ENCODE measurements at regions of chr6 and their contacts with region 1.

Region 1: DNA sequence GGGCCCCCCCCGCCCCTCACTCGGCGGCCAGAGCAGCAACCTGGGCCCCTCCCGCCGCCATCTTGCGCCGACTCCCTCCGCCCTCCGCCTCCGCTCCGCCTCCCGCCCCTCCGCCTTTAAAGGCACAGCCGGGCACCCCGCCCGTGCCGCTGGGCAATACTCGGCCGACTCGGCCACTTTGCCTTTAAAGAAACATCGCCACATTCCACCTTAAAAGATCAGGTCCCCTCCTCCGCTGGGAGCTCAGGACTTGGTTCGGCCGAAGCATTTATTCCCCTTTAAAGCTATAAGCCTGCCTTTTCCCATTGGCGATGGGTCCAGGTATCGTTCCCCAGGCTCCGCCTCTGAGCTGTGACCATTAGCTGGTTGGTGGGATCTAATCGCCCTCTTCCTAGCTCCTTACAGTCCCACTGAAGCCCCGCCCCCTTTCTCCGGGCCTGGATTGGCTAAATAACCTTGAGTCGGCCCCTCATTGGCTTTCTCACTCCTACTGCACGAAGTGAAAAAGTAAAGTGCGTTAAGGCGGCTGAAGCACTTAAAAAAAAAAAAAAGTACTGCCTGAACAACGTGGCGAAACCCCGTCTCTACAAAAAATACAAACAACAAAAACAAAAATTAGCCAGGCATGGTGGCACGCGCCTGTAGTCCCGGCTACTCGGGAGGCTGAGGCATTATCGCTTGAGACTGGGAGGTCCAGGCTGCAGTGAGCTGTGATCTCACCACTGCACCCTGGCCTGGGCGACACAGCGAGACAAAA is at the start of gene ZBTB22:
- DNase-seq: peak; percentile 87 to 97 (median 96)
- ATAC-seq: peak; percentile 73
- H3K4me3 ChIP-seq: peak within 1 kb of the TSS; percentile 97
- H3K4me3 Mint-ChIP-seq: peak within 1 kb of the TSS; percentile 81 to 100 (median 100)
- H3K27ac ChIP-seq: peak within 1 kb of the TSS; percentile 99
- H3K27ac Mint-ChIP-seq: peak within 1 kb of the TSS; percentile 97 to 99 (median 98)
- H3K4me1 ChIP-seq: peaks cover 59 to 62% of the 10 kb centered on the region in 2 donors
- H3K4me1 Mint-ChIP-seq: peaks cover 53 to 85% (median 75%) of the 10 kb centered on the region in 7 donors
- H3K27me3 ChIP-seq: no peaks in the 10 kb centered on the region
- H3K27me3 Mint-ChIP-seq: peaks cover 0 to 2% (median 0%) of the 10 kb centered on the region in 5 donors
- total RNA-seq, gene ZBTB22: 15.5 to 30.1 (median 20.5) TPM

Region 2: DNA sequence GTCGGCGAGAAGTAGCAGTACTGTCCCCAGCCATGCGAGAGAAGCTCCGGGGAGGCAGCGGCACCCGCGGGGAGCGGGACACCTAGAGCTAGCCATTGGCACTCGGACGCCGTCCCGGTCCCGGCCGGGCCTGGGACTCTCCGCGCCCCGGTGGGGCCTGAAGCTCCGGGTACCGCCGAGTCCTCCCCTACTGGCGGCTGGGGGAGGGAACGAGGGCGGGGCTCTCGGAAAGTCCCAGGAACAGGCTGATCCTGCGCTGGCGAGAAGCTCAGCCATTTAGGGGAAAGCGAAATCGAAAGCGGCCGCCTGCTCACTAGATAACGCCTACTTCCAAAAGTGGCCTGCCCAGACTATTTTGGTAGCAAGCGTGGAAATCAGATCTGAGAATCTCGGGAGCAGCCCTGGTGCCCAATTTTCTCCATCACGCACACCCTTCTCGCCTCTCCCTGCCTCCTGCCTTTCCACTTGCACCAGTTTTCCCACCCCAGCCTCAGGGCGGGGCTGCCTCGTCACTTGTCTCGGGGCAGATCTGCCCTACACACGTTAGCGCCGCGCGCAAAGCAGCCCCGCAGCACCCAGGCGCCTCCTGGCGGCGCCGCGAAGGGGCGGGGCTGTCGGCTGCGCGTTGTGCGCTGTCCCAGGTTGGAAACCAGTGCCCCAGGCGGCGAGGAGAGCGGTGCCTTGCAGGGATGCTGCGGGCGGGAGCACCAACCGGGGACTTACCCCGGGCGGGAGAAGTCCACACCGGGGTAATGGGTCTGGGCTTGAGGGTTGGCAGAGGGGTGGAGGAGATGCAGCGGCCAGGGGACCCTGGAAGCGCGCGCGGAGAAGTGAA is 464.1 kb before region 1 on chr6 and contains the starts of genes PSMB9 and TAP1:
- CTCF ChIA-PET with region 1: no interaction called
- POLR2A ChIA-PET with region 1: no interaction called
- intact Hi-C with region 1: loop called in 1 of 2 experiments (anchors 5 kb)
- DNase-seq: peak; percentile 92 to 97 (median 94)
- ATAC-seq: peak; percentile 92
- H3K4me3 ChIP-seq: peak within 1 kb of the TSS; percentile 91
- H3K4me3 Mint-ChIP-seq: peak within 1 kb of the TSS; percentile 96 to 100 (median 100)
- H3K27ac ChIP-seq: peak within 1 kb of the TSS; percentile 100
- H3K27ac Mint-ChIP-seq: peak within 1 kb of the TSS; percentile 97 to 100 (median 100)
- H3K4me1 ChIP-seq: peaks cover 45 to 57% of the 10 kb centered on the region in 2 donors
- H3K4me1 Mint-ChIP-seq: peaks cover 61 to 80% (median 72%) of the 10 kb centered on the region in 7 donors
- H3K27me3 ChIP-seq: no peaks in the 10 kb centered on the region
- H3K27me3 Mint-ChIP-seq: no peaks in the 10 kb centered on the region
- total RNA-seq, gene PSMB9: 70.3 to 452 (median 90.5) TPM
- total RNA-seq, gene TAP1: 92.1 to 500 (median 103) TPM

Region 3: GRCh38 chr6:33276864-33277662 is 40.8 kb before region 1 on chr6 and contains the start of gene B3GALT4:
- CTCF ChIA-PET with region 1: interaction called, 6 read pairs
- POLR2A ChIA-PET with region 1: interaction called, 37 read pairs
- intact Hi-C with region 1: loop called (anchors 1 kb)
- DNase-seq: peak; percentile 55 to 88 (median 63)
- ATAC-seq: peak; percentile 81
- H3K4me3 ChIP-seq: peak within 1 kb of the TSS; percentile 67
- H3K4me3 Mint-ChIP-seq: peak within 1 kb of the TSS; percentile 84 to 99 (median 92)
- H3K27ac ChIP-seq: peak within 1 kb of the TSS; percentile 87
- H3K27ac Mint-ChIP-seq: peak within 1 kb of the TSS; percentile 88 to 98 (median 93)
- H3K4me1 ChIP-seq: peaks cover 47 to 50% of the 10 kb centered on the region in 2 donors
- H3K4me1 Mint-ChIP-seq: peaks cover 38 to 83% (median 65%) of the 10 kb centered on the region in 7 donors
- H3K27me3 ChIP-seq: no peaks in the 10 kb centered on the region
- H3K27me3 Mint-ChIP-seq: no peaks in the 10 kb centered on the region
- total RNA-seq, gene B3GALT4: 12.9 to 48.0 (median 18.2) TPM

Region 4: GRCh38 chr6:33288921-33289748 is 28.7 kb before region 1 on chr6 and contains the starts of genes PFDN6 and WDR46:
- CTCF ChIA-PET with region 1: no interaction called
- POLR2A ChIA-PET with region 1: interaction called, 36 read pairs
- intact Hi-C with region 1: loop called (anchors 1 kb)
- DNase-seq: peak; percentile 55 to 90 (median 87)
- ATAC-seq: peak; percentile 96
- H3K4me3 ChIP-seq: peak within 1 kb of the TSS; percentile 97
- H3K4me3 Mint-ChIP-seq: peak within 1 kb of the TSS; percentile 89 to 99 (median 98)
- H3K27ac ChIP-seq: peak within 1 kb of the TSS; percentile 80
- H3K27ac Mint-ChIP-seq: peak within 1 kb of the TSS; percentile 89 to 98 (median 92)
- H3K4me1 ChIP-seq: peaks cover 19 to 20% of the 10 kb centered on the region in 2 donors
- H3K4me1 Mint-ChIP-seq: peaks cover 32 to 51% (median 45%) of the 10 kb centered on the region in 7 donors
- H3K27me3 ChIP-seq: no peaks in the 10 kb centered on the region
- H3K27me3 Mint-ChIP-seq: no peaks in the 10 kb centered on the region
- total RNA-seq, gene PFDN6: 14.6 to 73.2 (median 35.5) TPM
- total RNA-seq, gene WDR46: 25.3 to 62.7 (median 52.7) TPM

Region 5: DNA sequence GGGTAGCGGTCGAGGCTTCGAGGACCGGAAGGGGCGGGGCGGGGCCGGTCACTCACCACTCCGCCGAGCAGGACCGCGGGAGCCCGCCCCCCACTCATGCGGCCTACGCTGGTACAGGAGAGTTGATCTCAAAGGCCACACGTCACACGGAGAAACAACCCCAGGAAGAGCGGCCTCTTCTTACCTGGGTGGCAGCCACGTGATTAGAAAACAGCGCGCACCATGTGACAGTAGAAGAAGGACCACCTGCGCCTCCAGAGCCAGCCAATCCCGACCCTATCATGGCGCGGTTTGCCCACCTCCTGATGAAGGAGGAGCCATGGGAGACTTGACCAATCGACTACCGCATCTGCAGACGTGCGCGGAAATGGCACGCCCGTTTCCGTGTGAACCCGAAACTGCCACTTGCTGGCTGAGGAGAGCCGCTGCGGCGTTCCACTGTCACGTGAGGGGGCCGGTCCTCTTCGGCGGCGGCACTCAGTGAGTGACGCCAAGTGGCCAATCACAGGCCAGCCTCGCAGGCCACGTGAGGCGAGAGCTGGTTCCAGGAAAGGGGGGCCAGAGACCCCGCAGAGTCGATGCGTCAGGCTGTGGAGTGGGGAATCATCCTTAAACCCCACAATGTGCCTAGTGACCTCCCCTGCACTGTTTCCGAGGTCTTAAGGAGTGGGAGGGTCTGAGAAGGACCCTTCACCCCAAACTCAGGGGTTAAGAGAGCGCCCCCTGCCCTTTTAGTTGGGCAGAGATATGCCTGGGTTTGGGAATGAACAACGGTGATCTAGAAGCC is 100.2 kb after region 1 on chr6 and contains the start of gene CUTA:
- CTCF ChIA-PET with region 1: no interaction called
- POLR2A ChIA-PET with region 1: interaction called, 16 read pairs
- intact Hi-C with region 1: loop called in 1 of 2 experiments (anchors 1 kb)
- DNase-seq: peak; percentile 91 to 100 (median 99)
- ATAC-seq: peak; percentile 92
- H3K4me3 ChIP-seq: peak within 1 kb of the TSS; percentile 74
- H3K4me3 Mint-ChIP-seq: peak within 1 kb of the TSS; percentile 88 to 97 (median 94)
- H3K27ac ChIP-seq: peak within 1 kb of the TSS; percentile 94
- H3K27ac Mint-ChIP-seq: peak within 1 kb of the TSS; percentile 98 to 100 (median 99)
- H3K4me1 ChIP-seq: peaks cover 31 to 54% of the 10 kb centered on the region in 2 donors
- H3K4me1 Mint-ChIP-seq: peaks cover 60 to 89% (median 73%) of the 10 kb centered on the region in 7 donors
- H3K27me3 ChIP-seq: no peaks in the 10 kb centered on the region
- H3K27me3 Mint-ChIP-seq: no peaks in the 10 kb centered on the region
- total RNA-seq, gene CUTA: 148 to 235 (median 158) TPM

Region 6: GRCh38 chr6:33535104-33535603 is 217.3 kb after region 1 on chr6:
- CTCF ChIA-PET with region 1: no interaction called
- POLR2A ChIA-PET with region 1: no interaction called
- intact Hi-C with region 1: loop called in 1 of 2 experiments (anchors 5 kb)
- DNase-seq: no peak
- ATAC-seq: no peak
- H3K4me3 ChIP-seq: no peak overlapping the region
- H3K4me3 Mint-ChIP-seq: no peak overlapping the region
- H3K27ac ChIP-seq: no peak overlapping the region
- H3K27ac Mint-ChIP-seq: peak overlapping the region in 3 of 9 donors; percentile 9 to 74 (median 50)
- H3K4me1 ChIP-seq: peaks cover 0 to 10% of the 10 kb centered on the region in 2 donors
- H3K4me1 Mint-ChIP-seq: peaks cover 9 to 32% (median 27%) of the 10 kb centered on the region in 7 donors
- H3K27me3 ChIP-seq: no peaks in the 10 kb centered on the region
- H3K27me3 Mint-ChIP-seq: peaks cover 0 to 2% (median 0%) of the 10 kb centered on the region in 5 donors

Measured in naive thymus-derived CD4-positive, alpha-beta T cell (primary cell).